HepG2 (cell line): ENCODE measurements at regions of chr19 and their contacts with region 1.

Region 1: DNA sequence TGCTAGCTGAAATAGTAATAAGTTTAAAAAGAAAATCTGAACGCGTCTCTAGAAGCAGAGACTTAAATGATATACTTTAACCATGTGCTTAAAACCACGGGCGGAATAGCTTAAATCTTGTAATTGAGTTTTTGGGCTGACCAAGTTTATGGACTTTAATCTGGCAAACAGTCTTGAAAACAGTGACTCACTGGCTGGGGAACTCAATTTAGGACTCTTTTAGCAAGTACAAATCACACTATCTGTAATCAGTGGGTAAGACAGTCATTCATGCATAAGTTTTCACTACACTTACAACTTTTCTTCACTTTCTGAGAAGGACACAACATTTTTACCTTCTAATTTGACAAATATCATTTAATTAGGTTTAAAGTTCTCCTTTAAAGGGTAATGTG is 26.8 kb downstream of the ZNF627 start:
- DNase-seq: peak; percentile 45
- ATAC-seq: peak; percentile 41
- H3K4me3 ChIP-seq: peak overlapping the region; percentile 59 to 61 (median 61); a peak in 4 of 6 replicates
- H3K27ac ChIP-seq: no peak overlapping the region
- H3K4me1 ChIP-seq: peaks cover 22% of the 10 kb centered on the region
- H3K27me3 ChIP-seq: peaks cover 0 to 7% of the 10 kb centered on the region in 2 experiments; a peak in 1 of 5 replicates
- CTCF ChIP-seq: no peak
- EP300 ChIP-seq: no peak
- POLR2A ChIP-seq: no peak
- RAD21 ChIP-seq: no peak

Region 2: DNA sequence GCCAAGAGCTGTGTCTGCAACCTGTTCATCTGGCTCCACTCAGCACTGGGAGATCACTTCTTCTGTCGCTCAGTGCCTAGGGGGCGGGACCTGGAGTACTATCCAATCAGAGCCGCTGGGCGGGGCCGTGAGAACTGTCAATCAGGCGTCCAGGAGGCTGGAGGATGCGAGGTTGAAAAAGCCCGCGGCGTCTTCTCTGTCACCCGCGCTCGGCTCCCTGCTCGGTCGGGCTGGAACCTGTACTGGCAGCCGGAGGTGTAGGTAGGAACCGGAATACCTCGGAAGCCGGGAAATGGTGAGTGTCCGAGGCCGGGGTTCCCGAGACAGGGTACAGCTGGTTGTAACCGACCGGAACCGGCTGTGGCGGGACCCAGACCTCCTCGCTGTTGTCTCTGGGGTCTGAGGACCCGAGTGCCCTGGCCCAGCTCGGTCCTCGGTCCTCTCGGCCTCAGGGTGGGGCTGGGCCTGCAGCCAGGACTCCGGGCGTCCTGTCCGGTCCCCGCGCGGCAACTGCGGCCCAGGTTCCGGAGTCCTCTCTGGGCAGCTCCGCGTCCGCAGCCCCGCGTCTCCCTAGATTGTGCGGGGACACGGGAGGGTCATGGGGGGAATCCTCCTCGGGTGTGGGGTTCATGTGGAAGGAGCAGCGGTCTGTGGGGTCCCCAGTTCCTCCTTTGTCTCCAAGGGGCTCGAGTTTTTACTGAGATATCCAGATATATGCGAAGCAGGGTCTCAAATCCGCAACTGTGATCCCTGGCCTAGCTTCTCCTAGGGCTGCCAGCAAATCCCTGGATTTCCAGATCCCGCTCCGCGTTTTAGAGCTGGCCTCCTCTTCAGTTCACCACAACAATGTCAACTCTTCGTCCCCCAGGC is 15.8 kb after region 1 on chr19:
- CTCF ChIA-PET with region 1: no interaction called
- POLR2A ChIA-PET with region 1: interaction called, 10 read pairs
- in situ Hi-C with region 1: no loop called
- intact Hi-C with region 1: no loop called
- DNase-seq: peak; percentile 93
- ATAC-seq: peak; percentile 98
- H3K4me3 ChIP-seq: peak overlapping the region; percentile 94 to 97 (median 96)
- H3K27ac ChIP-seq: peak overlapping the region; percentile 80
- H3K4me1 ChIP-seq: peaks cover 12% of the 10 kb centered on the region; the same call in 1 of the 2 replicates
- H3K27me3 ChIP-seq: no peaks in the 10 kb centered on the region; a peak in 1 of 5 replicates
- CTCF ChIP-seq: 0 out of 2 replicates have a peak, but pooled peaks have one; percentile 1
- EP300 ChIP-seq: no peak
- POLR2A ChIP-seq: peak; percentile 46 to 66
- RAD21 ChIP-seq: no peak